Ascending aorta (tissue), 2 donors: ENCODE measurements at regions of chr21 and their contacts with region 1.

Region 1: GRCh38 chr21:28899744-28900143 is 92.9 kb downstream of the LTN1 start:
- DNase-seq: no peak
- H3K4me3 ChIP-seq: peak overlapping the region; percentile 18 to 21
- H3K27ac ChIP-seq: peak overlapping the region; percentile 65 to 76
- H3K4me1 ChIP-seq: peaks cover 2 to 36% of the 10 kb centered on the region in 2 donors
- H3K27me3 ChIP-seq: no peaks in the 10 kb centered on the region
- CTCF ChIP-seq: no peak

Region 2: GRCh38 chr21:28798798-28799197 is 100.9 kb before region 1 on chr21:
- intact Hi-C with region 1: loop called (anchors 5 kb)
- DNase-seq: no peak
- H3K4me3 ChIP-seq: no peak overlapping the region
- H3K27ac ChIP-seq: no peak overlapping the region
- H3K4me1 ChIP-seq: peaks cover 6 to 11% of the 10 kb centered on the region in 2 donors
- H3K27me3 ChIP-seq: no peaks in the 10 kb centered on the region
- CTCF ChIP-seq: no peak